PC-3 (cell line): ENCODE measurements at regions of chr3 and their contacts with region 1.

Region 1: DNA sequence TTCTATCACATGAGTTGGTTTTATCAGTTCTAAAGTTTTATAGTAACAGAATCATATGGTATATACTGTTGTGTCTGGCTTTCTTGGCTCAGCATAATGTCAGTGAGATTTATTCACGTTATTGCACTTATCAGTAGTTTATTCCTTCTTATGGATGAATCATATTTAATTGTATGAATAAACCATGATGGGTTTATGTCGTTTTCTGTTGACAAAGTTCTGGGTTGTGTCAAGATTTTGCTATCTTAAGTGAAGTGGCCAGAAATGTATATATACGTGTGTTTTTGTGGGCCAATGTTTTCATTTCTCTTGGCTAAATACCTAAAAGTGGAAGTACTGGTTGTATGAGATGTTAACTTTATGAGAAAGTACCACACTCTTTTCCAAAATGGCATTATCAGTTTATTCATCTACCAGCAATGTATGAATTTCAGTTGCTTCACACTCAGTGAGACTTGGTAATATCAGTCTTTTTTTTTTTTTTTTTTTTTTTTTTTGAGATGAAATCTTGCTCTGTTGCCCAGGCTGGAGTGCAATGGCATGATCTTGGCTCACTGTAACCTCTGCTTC is 112.4 kb upstream of the DCBLD2 start:
- DNase-seq: peak; percentile 92
- ATAC-seq: peak; percentile 86
- H3K4me3 ChIP-seq: no peak overlapping the region
- H3K27ac ChIP-seq: peak overlapping the region; percentile 17; the same call in 1 of the 2 replicates
- H3K4me1 ChIP-seq: peaks cover 16% of the 10 kb centered on the region
- H3K27me3 ChIP-seq: no peaks in the 10 kb centered on the region
- CTCF ChIP-seq: no peak

Region 2: GRCh38 chr3:98980915-98981596 is 32.8 kb before region 1 on chr3:
- CTCF ChIA-PET with region 1: no interaction called
- POLR2A ChIA-PET with region 1: no interaction called
- intact Hi-C with region 1: no loop called
- DNase-seq: peak; percentile 77
- ATAC-seq: peak; percentile 22; the same call in 1 of the 2 replicates
- H3K4me3 ChIP-seq: peak overlapping the region; percentile 62
- H3K27ac ChIP-seq: peak overlapping the region; percentile 98
- H3K4me1 ChIP-seq: peaks cover 87% of the 10 kb centered on the region
- H3K27me3 ChIP-seq: no peaks in the 10 kb centered on the region
- CTCF ChIP-seq: no peak

Region 3: GRCh38 chr3:100629421-100630127 is 1615.7 kb after region 1 on chr3:
- CTCF ChIA-PET with region 1: no interaction called
- POLR2A ChIA-PET with region 1: interaction called, 10 read pairs
- intact Hi-C with region 1: no loop called
- DNase-seq: peak; percentile 54
- ATAC-seq: peak; percentile 59
- H3K4me3 ChIP-seq: no peak overlapping the region
- H3K27ac ChIP-seq: no peak overlapping the region
- H3K4me1 ChIP-seq: peaks cover 10% of the 10 kb centered on the region
- H3K27me3 ChIP-seq: no peaks in the 10 kb centered on the region
- CTCF ChIP-seq: no peak